Left ventricle myocardium superior (tissue), 1 donor: ENCODE measurements at regions of chr21 and their contacts with region 1.

Region 1: GRCh38 chr21:39715804-39716397 is 29.1 kb upstream of the IGSF5 start:
- DNase-seq: peak; percentile 41
- ATAC-seq: peak; percentile 43

Region 2: DNA sequence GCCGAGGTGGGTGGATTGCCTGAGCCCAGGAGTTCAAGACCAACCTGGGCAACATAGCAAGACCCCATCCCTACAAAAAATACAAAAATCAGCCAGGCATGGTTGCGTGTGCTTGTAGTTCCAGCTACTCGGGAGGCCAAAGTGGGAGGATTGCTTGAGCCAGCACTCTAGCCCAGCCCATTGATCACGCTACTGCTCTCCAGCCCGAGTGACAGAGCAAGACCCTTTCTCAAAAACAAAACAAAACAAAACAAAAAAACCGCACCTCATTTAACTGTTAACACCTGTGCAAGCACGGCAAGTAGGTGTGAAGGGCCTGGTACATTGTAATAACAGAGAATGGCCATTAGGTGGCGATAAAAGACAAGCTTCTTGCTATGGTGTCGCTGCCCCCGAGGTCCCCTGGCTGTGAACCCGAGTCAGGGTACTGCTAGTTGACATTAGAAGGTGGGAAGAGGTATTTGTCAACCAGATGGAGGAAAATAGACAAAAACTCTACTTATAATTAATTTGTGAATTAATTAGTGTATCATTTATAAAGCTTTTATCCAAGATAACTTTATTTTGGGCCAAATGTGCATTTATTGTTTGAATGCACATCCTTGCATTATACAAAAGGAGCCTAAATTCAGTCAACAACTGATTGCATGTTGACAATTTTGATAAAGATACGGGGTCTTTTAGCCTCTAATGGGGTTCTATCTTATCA is 197.6 kb before region 1 on chr21:
- intact Hi-C with region 1: loop called (anchors 2 kb)
- DNase-seq: no peak
- ATAC-seq: peak; percentile 72

Region 3: GRCh38 chr21:40200946-40201345 is 485.0 kb after region 1 on chr21:
- intact Hi-C with region 1: no loop called
- DNase-seq: no peak
- ATAC-seq: no peak